ENCODE measurements at regions of chr6 and their contacts with region 1.

Region 1: GRCh38 chr6:43427406-43428111 is at the start of gene ABCC10:
- DNase-seq: peak; percentile 98
- H3K4me3 ChIP-seq: peak within 1 kb of the TSS; percentile 67 to 88 (median 78)
- H3K27ac ChIP-seq: peak within 1 kb of the TSS; percentile 85 to 93 (median 90)
- H3K4me1 ChIP-seq: peaks cover 0 to 20% (median 17%) of the 10 kb centered on the region in 4 donors
- H3K27me3 ChIP-seq: no peaks in the 10 kb centered on the region
- CTCF ChIP-seq: peak in 3 of 4 experiments; percentile 5 to 30 (median 28)
- EP300 ChIP-seq: peak in 1 of 4 donors; percentile 14
- POLR2A ChIP-seq: peak; percentile 9 to 34
- total RNA-seq, gene ABCC10: 11.5 to 24.9 (median 12.3) TPM

Region 2: GRCh38 chr6:43263314-43264178 is 164.0 kb before region 1 on chr6:
- intact Hi-C with region 1: loop called (anchors 10 kb)
- DNase-seq: peak; percentile 82
- H3K4me3 ChIP-seq: no peak overlapping the region
- H3K27ac ChIP-seq: no peak overlapping the region
- H3K4me1 ChIP-seq: peaks cover 0 to 11% (median 9%) of the 10 kb centered on the region in 4 donors
- H3K27me3 ChIP-seq: no peaks in the 10 kb centered on the region
- CTCF ChIP-seq: peak; percentile 53 to 76 (median 68)
- EP300 ChIP-seq: no peak
- POLR2A ChIP-seq: no peak

Region 3: DNA sequence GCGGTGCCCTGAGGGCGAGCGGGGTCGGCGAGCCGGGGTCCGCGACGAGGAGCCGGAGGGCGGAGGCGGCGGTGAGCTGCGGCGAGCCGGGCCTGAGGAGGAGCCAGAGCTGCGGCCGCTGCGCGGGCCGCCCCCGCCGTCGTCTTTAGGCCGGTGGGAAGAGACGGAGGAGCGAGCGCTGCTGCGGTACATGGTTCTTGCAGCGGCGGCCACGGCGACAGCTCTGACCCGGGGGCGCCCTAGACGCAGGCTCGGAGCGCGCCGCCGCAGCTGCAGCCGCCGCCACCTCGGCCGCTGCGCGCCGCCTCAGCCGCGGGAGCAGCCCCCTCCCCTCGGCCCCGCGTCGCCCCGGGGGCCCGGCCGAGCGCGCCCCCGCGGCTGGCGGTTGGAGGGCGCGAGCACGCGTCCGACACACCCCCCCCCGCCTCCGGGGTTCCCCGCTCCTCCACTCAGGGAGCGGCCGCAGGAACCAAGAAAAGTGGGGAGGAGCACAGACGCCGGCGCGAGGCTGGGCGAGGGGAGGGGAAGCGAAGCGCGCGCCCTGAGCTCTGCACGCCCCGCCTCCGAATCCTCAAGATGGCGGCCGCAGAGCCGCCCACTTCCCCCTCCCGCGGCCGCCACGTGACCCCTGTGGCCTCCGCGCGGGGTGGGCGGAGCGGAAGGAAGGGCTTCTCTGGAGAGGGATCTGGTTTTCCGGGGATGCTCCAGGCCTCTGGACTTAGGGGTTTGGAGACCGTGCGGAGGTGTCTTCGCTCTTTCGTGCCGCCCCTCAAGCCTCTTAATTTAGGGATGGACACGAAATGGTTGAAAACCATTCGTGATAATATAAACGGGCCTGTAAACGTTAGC is 58.2 kb before region 1 on chr6 and contains the start of gene ZNF318:
- intact Hi-C with region 1: loop called (anchors 1 kb)
- DNase-seq: peak; percentile 98
- H3K4me3 ChIP-seq: peak within 1 kb of the TSS; percentile 70 to 94 (median 87)
- H3K27ac ChIP-seq: peak within 1 kb of the TSS; percentile 84 to 95 (median 92)
- H3K4me1 ChIP-seq: peaks cover 0 to 33% (median 23%) of the 10 kb centered on the region in 4 donors
- H3K27me3 ChIP-seq: no peaks in the 10 kb centered on the region
- CTCF ChIP-seq: no peak
- EP300 ChIP-seq: peak in 1 of 4 donors; percentile 45
- POLR2A ChIP-seq: no peak
- total RNA-seq, gene ZNF318: 11.7 to 19.1 (median 15.1) TPM

Region 4: DNA sequence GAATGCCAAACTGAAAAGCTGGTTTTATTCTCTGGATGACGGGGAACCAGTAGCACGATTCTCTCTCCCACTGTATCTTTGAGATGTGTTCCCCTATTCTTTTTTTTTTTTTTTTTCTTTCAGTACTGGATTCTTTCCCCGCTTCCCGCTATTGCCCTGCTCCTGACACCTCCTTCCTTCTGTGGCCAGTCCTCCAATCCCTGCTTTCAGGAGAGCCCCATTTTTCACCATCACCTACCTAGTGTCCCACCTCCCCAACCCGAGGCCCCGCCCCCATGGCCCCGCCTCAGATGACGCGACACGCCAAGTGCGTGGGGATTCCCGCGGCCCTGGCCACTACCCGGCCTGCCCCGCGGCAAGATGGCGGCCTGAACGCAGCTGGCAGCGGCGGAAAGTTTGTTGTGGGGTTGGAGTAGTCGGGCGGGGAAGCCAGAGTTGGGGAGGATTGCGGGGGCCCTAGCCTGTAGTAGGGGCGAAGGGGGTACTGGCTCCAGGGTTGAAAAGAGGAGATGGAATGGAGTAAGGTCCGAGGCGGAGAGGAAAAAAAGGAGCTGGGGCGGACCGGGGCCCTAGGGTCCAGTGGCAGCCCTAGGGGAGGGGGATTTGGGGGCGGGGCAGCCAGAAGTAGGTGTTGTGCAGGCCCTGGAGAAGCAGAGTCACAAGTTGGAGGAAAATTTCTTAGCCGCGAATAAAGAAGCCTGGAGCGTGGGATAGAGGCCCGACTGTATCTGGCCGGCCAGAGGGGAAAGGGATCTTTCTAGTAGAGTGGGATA is 49.9 kb after region 1 on chr6 and contains the start of gene TJAP1:
- intact Hi-C with region 1: loop called (anchors 2 kb)
- DNase-seq: peak; percentile 96
- H3K4me3 ChIP-seq: peak within 1 kb of the TSS; percentile 59 to 82 (median 80)
- H3K27ac ChIP-seq: peak within 1 kb of the TSS; percentile 69 to 87 (median 85)
- H3K4me1 ChIP-seq: peaks cover 0 to 32% (median 20%) of the 10 kb centered on the region in 4 donors
- H3K27me3 ChIP-seq: no peaks in the 10 kb centered on the region
- CTCF ChIP-seq: no peak
- EP300 ChIP-seq: no peak
- POLR2A ChIP-seq: peak; percentile 54 to 74
- total RNA-seq, gene TJAP1: 14.8 to 27.1 (median 23.6) TPM

Region 5: DNA sequence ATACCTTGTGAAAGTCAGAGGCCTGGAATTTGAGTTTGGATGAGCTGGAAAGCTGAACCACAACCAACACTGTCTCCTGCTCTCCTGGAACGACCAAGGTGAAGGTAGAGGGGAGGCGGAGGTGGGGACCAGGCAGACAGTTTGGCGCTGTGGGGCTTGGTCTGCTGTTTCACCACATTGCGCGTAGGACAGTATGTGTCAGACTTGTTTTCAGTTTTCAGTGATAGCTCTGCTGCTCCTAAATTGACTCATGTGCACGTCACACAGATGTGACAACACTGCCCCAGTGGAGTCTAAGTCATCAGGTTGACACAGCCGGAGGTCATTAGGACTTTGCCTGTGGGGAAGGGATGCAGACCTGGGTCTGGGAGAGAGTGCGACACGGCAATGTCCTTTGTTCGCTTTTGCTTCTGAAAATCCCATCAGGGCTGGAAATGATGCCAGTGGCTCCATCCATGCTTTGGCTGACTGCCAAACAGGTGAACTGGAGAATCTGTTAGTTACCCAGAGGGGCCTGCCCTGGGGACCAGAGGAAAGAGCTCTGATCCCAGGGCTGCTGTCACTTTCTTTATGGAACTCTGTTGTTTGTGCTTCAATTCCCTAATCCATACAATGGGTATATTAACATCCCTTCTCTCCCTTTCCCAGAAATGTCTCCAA is 1215.4 kb after region 1 on chr6:
- intact Hi-C with region 1: no loop called
- DNase-seq: no peak
- H3K4me3 ChIP-seq: no peak overlapping the region
- H3K27ac ChIP-seq: no peak overlapping the region
- H3K4me1 ChIP-seq: no peaks in the 10 kb centered on the region
- H3K27me3 ChIP-seq: no peaks in the 10 kb centered on the region
- CTCF ChIP-seq: no peak
- EP300 ChIP-seq: no peak
- POLR2A ChIP-seq: no peak